SK-N-SH (cell line): ENCODE measurements at regions of chr6 and their contacts with region 1.

Region 1: GRCh38 chr6:44338228-44339122 is 4.0 kb upstream of the SPATS1 start:
- DNase-seq: peak; percentile 71
- H3K4me3 ChIP-seq: no peak overlapping the region; a peak in 1 of 4 replicates
- H3K27ac ChIP-seq: no peak overlapping the region
- H3K4me1 ChIP-seq: peaks cover 0 to 22% of the 10 kb centered on the region in 2 experiments; a peak in 2 of 4 replicates
- H3K27me3 ChIP-seq: peaks cover 36% of the 10 kb centered on the region
- CTCF ChIP-seq: peak; percentile 84
- EP300 ChIP-seq: no peak
- RAD21 ChIP-seq: peak; percentile 92

Region 2: DNA sequence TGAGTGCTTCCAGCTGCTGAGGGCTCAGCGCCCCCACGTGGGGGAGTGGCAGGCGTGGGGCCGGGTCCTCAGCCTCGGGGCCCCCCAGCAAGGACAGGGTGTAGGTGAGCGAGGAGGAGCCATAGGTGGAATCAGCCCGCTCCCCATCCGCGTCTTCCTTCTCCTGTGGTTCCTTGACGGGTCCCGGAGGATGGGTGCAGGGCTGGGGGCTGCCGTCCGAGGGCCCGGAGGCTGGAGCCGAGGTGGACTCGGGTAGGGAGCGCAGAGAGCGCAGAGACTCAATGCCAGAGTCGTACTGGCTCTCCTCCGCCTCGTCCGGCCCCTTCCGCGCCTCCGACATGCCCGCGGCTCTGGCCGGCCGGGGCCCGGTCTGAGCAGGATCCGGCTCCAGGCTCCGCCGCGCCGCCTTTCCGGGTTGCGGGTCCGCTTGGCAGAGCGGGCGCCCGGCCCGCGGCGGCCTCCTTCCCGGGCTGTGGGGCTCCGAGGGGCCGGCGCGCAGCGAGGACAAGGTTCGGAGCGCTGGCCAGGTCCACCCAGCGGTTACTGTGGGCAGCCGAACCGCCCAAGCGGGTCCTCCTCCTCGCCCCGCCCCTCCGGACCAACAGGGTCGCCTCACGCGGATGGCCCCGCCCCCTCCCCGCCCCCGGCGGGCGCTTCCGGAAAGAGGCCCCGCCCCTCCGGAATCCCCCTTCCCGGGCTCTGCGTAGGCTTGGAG is 73.3 kb before region 1 on chr6 and contains the start of gene NFKBIE:
- CTCF ChIA-PET with region 1: interaction called, 220 read pairs
- POLR2A ChIA-PET with region 1: interaction called, 10 read pairs
- DNase-seq: peak; percentile 98
- H3K4me3 ChIP-seq: peak within 1 kb of the TSS; percentile 74 to 89
- H3K27ac ChIP-seq: peak within 1 kb of the TSS; percentile 56 to 62
- H3K4me1 ChIP-seq: peaks cover 16 to 35% of the 10 kb centered on the region in 2 experiments; a peak in 2 of 4 replicates
- H3K27me3 ChIP-seq: peaks cover 20% of the 10 kb centered on the region
- CTCF ChIP-seq: peak; percentile 53
- EP300 ChIP-seq: no peak
- RAD21 ChIP-seq: peak; percentile 52
- polyA plus RNA-seq, gene NFKBIE: 5.8 and 6.4 TPM in 2 replicates

Region 3: GRCh38 chr6:44297063-44298038 is 41.1 kb before region 1 on chr6:
- CTCF ChIA-PET with region 1: interaction called, 17 read pairs
- POLR2A ChIA-PET with region 1: interaction called, 4 read pairs
- DNase-seq: peak; percentile 89
- H3K4me3 ChIP-seq: peak overlapping the region; percentile 56 to 58
- H3K27ac ChIP-seq: no peak overlapping the region
- H3K4me1 ChIP-seq: peaks cover 0 to 15% of the 10 kb centered on the region in 2 experiments; a peak in 1 of 4 replicates
- H3K27me3 ChIP-seq: peaks cover 16% of the 10 kb centered on the region; the same call in 1 of the 2 replicates
- CTCF ChIP-seq: no peak
- EP300 ChIP-seq: no peak
- RAD21 ChIP-seq: no peak

Region 4: GRCh38 chr6:44312901-44313788 is 25.3 kb before region 1 on chr6 and contains the start of gene AARS2:
- CTCF ChIA-PET with region 1: interaction called, 40 read pairs
- POLR2A ChIA-PET with region 1: no interaction called
- DNase-seq: peak; percentile 92
- H3K4me3 ChIP-seq: peak within 1 kb of the TSS; percentile 90 to 96
- H3K27ac ChIP-seq: peak within 1 kb of the TSS; percentile 24 to 85; a peak in 3 of 4 replicates
- H3K4me1 ChIP-seq: peaks cover 4 to 8% of the 10 kb centered on the region in 2 experiments; a peak in 3 of 4 replicates
- H3K27me3 ChIP-seq: no peaks in the 10 kb centered on the region
- CTCF ChIP-seq: peak; percentile 95
- EP300 ChIP-seq: peak in 1 of 2 experiments; percentile 15; a peak in 1 of 4 replicates
- RAD21 ChIP-seq: no peak
- polyA plus RNA-seq, gene AARS2: 9.0 and 9.5 TPM in 2 replicates